ENCODE measurements at regions of chr17 and their contacts with region 1.

Region 1: DNA sequence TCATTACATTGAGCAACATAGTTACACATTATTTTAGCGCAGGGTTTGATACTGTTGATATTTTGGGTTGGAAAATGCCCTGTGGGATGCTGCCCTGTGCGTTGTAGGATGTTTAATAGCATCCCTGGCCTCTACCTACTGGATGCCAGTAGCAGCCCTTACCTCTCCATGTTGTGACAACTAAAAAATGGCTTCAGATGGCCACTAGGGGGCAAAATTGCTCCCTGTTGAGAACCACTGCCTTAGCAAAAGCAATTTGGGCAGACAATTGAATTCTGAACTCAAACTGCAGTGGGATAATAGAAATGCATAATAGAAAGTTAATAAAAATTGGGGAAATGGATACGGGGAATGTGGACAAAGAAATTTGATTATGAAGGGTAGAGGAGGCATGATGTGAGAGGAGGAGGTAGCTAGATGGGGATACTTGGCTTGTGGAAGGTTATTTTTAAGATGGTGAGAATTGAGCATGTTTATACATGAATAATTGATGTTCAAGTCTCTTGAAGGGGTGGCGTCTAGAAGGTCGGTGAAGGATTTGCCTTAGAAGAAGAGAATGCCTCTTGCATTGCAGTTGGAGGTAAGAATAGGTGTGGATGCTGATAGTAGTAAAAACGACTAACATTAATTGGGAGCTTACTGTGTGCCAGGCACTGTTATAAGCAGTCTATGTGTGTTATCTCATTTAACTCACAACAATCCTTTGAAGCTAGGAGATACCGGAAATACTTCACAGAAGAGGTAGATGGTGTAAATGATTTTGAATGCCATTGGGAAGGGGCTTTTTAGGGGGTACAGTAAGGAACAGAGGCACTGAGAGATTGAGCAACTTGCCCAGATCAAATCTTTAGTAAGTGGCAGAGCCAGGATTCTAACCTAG is 19.0 kb downstream of the HEATR9 start:
- DNase-seq: peak; percentile 67
- ATAC-seq: peak; percentile 80
- H3K4me3 Mint-ChIP-seq: no peak overlapping the region
- H3K27ac Mint-ChIP-seq: peak overlapping the region; percentile 53
- H3K4me1 Mint-ChIP-seq: peaks cover 9% of the 10 kb centered on the region
- H3K27me3 Mint-ChIP-seq: no peaks in the 10 kb centered on the region

Region 2: GRCh38 chr17:35713069-35713728 is 136.5 kb before region 1 on chr17:
- CTCF ChIA-PET with region 1: no interaction called
- POLR2A ChIA-PET with region 1: no interaction called
- intact Hi-C with region 1: no loop called
- DNase-seq: no peak
- ATAC-seq: no peak
- H3K4me3 Mint-ChIP-seq: no peak overlapping the region
- H3K27ac Mint-ChIP-seq: no peak overlapping the region
- H3K4me1 Mint-ChIP-seq: peaks cover 28% of the 10 kb centered on the region
- H3K27me3 Mint-ChIP-seq: no peaks in the 10 kb centered on the region

Region 3: GRCh38 chr17:35808962-35809854 is 40.5 kb before region 1 on chr17 and contains the start of gene TAF15:
- CTCF ChIA-PET with region 1: no interaction called
- POLR2A ChIA-PET with region 1: no interaction called
- intact Hi-C with region 1: no loop called
- DNase-seq: peak; percentile 98
- ATAC-seq: peak; percentile 88
- H3K4me3 Mint-ChIP-seq: peak within 1 kb of the TSS; percentile 78
- H3K27ac Mint-ChIP-seq: peak within 1 kb of the TSS; percentile 97
- H3K4me1 Mint-ChIP-seq: peaks cover 57% of the 10 kb centered on the region
- H3K27me3 Mint-ChIP-seq: no peaks in the 10 kb centered on the region
- total RNA-seq, gene TAF15: 316 to 330 TPM

Region 4: DNA sequence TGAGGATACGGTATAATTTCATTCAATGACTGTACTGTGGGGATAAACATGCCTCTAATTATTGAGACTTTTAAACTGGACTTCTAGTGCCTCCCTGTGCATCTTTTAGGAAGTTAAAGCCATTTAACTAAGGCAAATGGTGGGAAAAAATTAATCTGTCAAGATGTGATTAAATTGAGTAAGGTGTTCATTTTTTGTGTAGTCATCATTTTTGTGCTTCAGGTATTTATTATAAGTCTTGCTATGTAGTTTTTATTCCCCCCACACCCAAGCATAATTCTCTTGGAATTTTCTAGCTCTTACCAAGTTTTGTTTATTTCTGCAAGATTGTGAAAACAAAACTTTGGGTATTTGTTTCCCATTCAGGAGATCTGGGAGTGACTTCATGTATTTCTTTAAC is 30.3 kb before region 1 on chr17:
- CTCF ChIA-PET with region 1: interaction called, 5 read pairs
- POLR2A ChIA-PET with region 1: no interaction called
- intact Hi-C with region 1: loop called in 1 of 2 experiments (anchors 2 kb)
- DNase-seq: no peak
- ATAC-seq: no peak
- H3K4me3 Mint-ChIP-seq: no peak overlapping the region
- H3K27ac Mint-ChIP-seq: peak overlapping the region; percentile 28
- H3K4me1 Mint-ChIP-seq: peaks cover 36% of the 10 kb centered on the region
- H3K27me3 Mint-ChIP-seq: no peaks in the 10 kb centered on the region

Region 5: GRCh38 chr17:35865412-35866340 is 16.0 kb after region 1 on chr17:
- CTCF ChIA-PET with region 1: interaction called, 14 read pairs
- POLR2A ChIA-PET with region 1: no interaction called
- intact Hi-C with region 1: no loop called
- DNase-seq: no peak
- ATAC-seq: peak; percentile 47
- H3K4me3 Mint-ChIP-seq: no peak overlapping the region
- H3K27ac Mint-ChIP-seq: no peak overlapping the region
- H3K4me1 Mint-ChIP-seq: peaks cover 13% of the 10 kb centered on the region
- H3K27me3 Mint-ChIP-seq: no peaks in the 10 kb centered on the region

Region 6: DNA sequence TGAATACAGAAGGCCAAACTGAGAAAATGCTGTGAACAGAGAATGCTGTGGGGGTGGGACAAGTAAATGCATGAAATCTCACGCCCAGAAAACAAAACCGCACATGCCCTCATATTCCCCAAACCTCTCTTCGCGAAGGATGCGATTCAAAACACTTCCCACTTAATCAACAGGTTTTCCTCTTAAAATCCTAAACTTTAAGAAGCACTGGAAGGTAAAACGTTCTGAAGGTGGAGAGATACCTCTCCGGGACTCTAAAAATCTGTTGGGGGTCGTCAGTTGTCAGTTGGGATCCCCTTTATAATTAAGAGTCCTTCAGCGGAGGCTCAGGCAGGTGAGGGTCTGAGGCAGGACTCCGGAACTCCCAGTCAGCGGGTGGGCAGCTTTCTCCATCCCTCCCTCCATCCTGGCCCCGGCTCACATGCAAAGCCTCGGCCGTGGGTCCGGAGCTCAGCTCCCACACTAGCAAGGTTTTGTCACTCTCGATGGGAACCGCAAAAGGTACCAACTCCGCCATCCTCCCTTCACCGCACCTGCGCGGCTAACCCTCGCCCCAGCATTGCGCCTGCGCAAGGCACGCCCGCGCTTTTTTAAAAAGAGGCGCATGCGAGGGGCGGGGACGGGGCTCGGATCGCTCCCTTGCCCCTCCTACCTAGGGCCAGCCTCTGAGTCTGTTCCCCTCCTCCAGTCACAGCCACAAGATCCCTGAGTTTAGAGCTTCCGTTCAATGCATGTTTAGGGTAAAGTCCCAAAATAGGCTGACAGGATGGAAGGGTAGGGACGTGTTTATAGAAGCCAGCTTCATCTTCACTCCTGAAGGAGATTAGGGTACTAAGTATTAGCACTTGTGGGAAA is 80.7 kb after region 1 on chr17 and contains the start of gene RDM1:
- CTCF ChIA-PET with region 1: interaction called, 8 read pairs
- POLR2A ChIA-PET with region 1: interaction called, 3 read pairs
- intact Hi-C with region 1: loop called (anchors 1 kb)
- DNase-seq: peak; percentile 95
- ATAC-seq: peak; percentile 100
- H3K4me3 Mint-ChIP-seq: peak within 1 kb of the TSS; percentile 80
- H3K27ac Mint-ChIP-seq: peak within 1 kb of the TSS; percentile 62
- H3K4me1 Mint-ChIP-seq: peaks cover 22% of the 10 kb centered on the region
- H3K27me3 Mint-ChIP-seq: no peaks in the 10 kb centered on the region
- total RNA-seq, gene RDM1: 4.4 to 6.5 TPM

Region 7: GRCh38 chr17:36008998-36009665 is 159.4 kb after region 1 on chr17:
- CTCF ChIA-PET with region 1: interaction called, 4 read pairs
- POLR2A ChIA-PET with region 1: no interaction called
- intact Hi-C with region 1: loop called in 1 of 2 experiments (anchors 5 kb)
- DNase-seq: peak; percentile 24
- ATAC-seq: no peak
- H3K4me3 Mint-ChIP-seq: no peak overlapping the region
- H3K27ac Mint-ChIP-seq: no peak overlapping the region
- H3K4me1 Mint-ChIP-seq: peaks cover 3% of the 10 kb centered on the region
- H3K27me3 Mint-ChIP-seq: peaks cover 4% of the 10 kb centered on the region